Naive thymus-derived CD4-positive, alpha-beta T cell (primary cell): ENCODE measurements at regions of chr2 and their contacts with region 1.

Region 1: GRCh38 chr2:201231781-201232466 is 28.4 kb upstream of the CASP8 start:
- DNase-seq: peak; percentile 75 to 95 (median 91)
- ATAC-seq: peak; percentile 79
- H3K4me3 ChIP-seq: peak overlapping the region; percentile 70
- H3K4me3 Mint-ChIP-seq: peak overlapping the region; percentile 66 to 99 (median 96)
- H3K27ac ChIP-seq: no peak overlapping the region
- H3K27ac Mint-ChIP-seq: peak overlapping the region; percentile 85 to 98 (median 95)
- H3K4me1 ChIP-seq: peaks cover 27 to 32% of the 10 kb centered on the region in 2 donors
- H3K4me1 Mint-ChIP-seq: peaks cover 28 to 77% (median 67%) of the 10 kb centered on the region in 7 donors
- H3K27me3 ChIP-seq: no peaks in the 10 kb centered on the region
- H3K27me3 Mint-ChIP-seq: no peaks in the 10 kb centered on the region

Region 2: DNA sequence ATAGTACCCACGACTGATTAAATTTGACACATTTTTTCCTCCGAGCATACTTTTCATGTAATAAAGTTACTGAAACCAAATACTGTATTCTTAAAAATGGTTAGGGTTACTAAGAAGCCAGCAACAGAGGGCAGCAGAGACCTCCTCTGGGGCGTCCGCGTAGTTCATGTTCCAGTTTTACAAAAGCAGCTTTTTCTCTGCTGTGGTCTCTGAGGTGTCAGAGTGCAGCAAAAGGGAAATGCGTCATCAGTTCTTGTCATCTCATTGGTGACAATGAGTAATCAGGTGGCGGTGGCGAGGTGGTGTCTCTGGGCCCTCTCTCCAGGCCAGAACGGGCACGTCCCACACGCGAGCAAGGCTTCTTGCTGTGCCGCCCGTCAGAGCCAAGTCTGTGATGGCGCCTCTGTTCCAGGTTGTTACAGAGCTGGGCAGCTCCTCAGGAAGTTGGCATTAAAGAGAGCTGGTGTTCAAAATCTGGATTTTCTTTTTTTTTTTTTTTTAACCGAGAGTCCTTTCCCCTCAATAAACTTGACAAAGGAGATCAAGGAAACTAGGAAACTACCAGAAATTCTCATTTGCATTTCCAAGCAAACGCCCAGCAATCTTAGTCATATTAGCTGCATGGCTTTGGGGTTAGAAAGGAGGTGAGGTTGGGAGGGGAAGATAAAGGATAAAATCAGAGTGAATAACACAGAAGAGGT is 518.8 kb before region 1 on chr2:
- CTCF ChIA-PET with region 1: interaction called, 5 read pairs
- POLR2A ChIA-PET with region 1: interaction called, 4 read pairs
- intact Hi-C with region 1: loop called (anchors 1 kb)
- DNase-seq: peak; percentile 72 to 96 (median 94)
- ATAC-seq: peak; percentile 98
- H3K4me3 ChIP-seq: peak overlapping the region; percentile 24
- H3K4me3 Mint-ChIP-seq: peak overlapping the region; percentile 75 to 88 (median 81)
- H3K27ac ChIP-seq: peak overlapping the region; percentile 82
- H3K27ac Mint-ChIP-seq: peak overlapping the region; percentile 97 to 100 (median 99)
- H3K4me1 ChIP-seq: peaks cover 5 to 8% of the 10 kb centered on the region in 2 donors
- H3K4me1 Mint-ChIP-seq: peaks cover 0 to 25% (median 12%) of the 10 kb centered on the region in 7 donors
- H3K27me3 ChIP-seq: no peaks in the 10 kb centered on the region
- H3K27me3 Mint-ChIP-seq: peaks cover 0 to 4% (median 0%) of the 10 kb centered on the region in 5 donors

Region 3: GRCh38 chr2:200963124-200963917 is 268.6 kb before region 1 on chr2 and contains the start of gene ORC2:
- CTCF ChIA-PET with region 1: interaction called, 3 read pairs
- POLR2A ChIA-PET with region 1: interaction called, 8 read pairs
- intact Hi-C with region 1: loop called (anchors 1 to 2 kb)
- DNase-seq: peak; percentile 92 to 97 (median 95)
- ATAC-seq: peak; percentile 98
- H3K4me3 ChIP-seq: peak within 1 kb of the TSS; percentile 89
- H3K4me3 Mint-ChIP-seq: peak within 1 kb of the TSS; percentile 89 to 100 (median 98)
- H3K27ac ChIP-seq: peak within 1 kb of the TSS; percentile 90
- H3K27ac Mint-ChIP-seq: peak within 1 kb of the TSS; percentile 96 to 100 (median 99)
- H3K4me1 ChIP-seq: peaks cover 21 to 32% of the 10 kb centered on the region in 2 donors
- H3K4me1 Mint-ChIP-seq: peaks cover 40 to 83% (median 70%) of the 10 kb centered on the region in 7 donors
- H3K27me3 ChIP-seq: no peaks in the 10 kb centered on the region
- H3K27me3 Mint-ChIP-seq: no peaks in the 10 kb centered on the region
- total RNA-seq, gene ORC2: 29.8 to 78.0 (median 56.2) TPM

Region 4: DNA sequence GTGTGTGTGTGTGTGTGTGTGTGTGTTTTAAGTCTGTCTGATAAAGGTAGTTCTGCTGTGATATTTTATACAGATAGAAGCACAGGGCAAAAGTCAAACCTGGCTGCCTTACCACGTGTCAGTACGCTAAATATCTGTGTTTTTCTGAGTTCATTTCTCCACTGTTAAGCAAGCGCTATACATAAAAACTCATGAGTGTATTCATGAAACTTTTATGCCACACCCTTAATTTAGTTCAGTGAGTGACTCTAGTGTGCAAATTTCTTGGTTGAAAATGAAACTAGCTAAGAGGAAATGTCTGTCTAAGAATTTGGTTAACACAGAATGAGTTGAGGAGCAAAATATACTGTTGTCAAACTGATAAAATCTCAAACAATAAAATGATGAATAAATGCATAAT is 37.8 kb before region 1 on chr2:
- CTCF ChIA-PET with region 1: interaction called, 70 read pairs
- POLR2A ChIA-PET with region 1: interaction called, 12 read pairs
- intact Hi-C with region 1: no loop called
- DNase-seq: peak in 7 of 9 donors; percentile 20 to 49 (median 38)
- ATAC-seq: peak; percentile 66
- H3K4me3 ChIP-seq: peak overlapping the region; percentile 18
- H3K4me3 Mint-ChIP-seq: peak overlapping the region; percentile 48 to 98 (median 78)
- H3K27ac ChIP-seq: peak overlapping the region; percentile 62
- H3K27ac Mint-ChIP-seq: peak overlapping the region; percentile 78 to 96 (median 91)
- H3K4me1 ChIP-seq: peaks cover 39 to 73% of the 10 kb centered on the region in 2 donors
- H3K4me1 Mint-ChIP-seq: peaks cover 44 to 88% (median 72%) of the 10 kb centered on the region in 7 donors
- H3K27me3 ChIP-seq: no peaks in the 10 kb centered on the region
- H3K27me3 Mint-ChIP-seq: no peaks in the 10 kb centered on the region

Region 5: GRCh38 chr2:201270293-201271001 is 38.5 kb after region 1 on chr2:
- CTCF ChIA-PET with region 1: interaction called, 64 read pairs
- POLR2A ChIA-PET with region 1: interaction called, 77 read pairs
- intact Hi-C with region 1: loop called (anchors 1 to 5 kb)
- DNase-seq: no peak
- ATAC-seq: no peak
- H3K4me3 ChIP-seq: no peak overlapping the region
- H3K4me3 Mint-ChIP-seq: peak overlapping the region in 6 of 10 donors; percentile 3 to 32 (median 16)
- H3K27ac ChIP-seq: peak overlapping the region; percentile 14
- H3K27ac Mint-ChIP-seq: peak overlapping the region in 8 of 9 donors; percentile 32 to 85 (median 59)
- H3K4me1 ChIP-seq: peaks cover 20 to 77% of the 10 kb centered on the region in 2 donors
- H3K4me1 Mint-ChIP-seq: peaks cover 48 to 88% (median 76%) of the 10 kb centered on the region in 7 donors
- H3K27me3 ChIP-seq: no peaks in the 10 kb centered on the region
- H3K27me3 Mint-ChIP-seq: no peaks in the 10 kb centered on the region

Region 6: DNA sequence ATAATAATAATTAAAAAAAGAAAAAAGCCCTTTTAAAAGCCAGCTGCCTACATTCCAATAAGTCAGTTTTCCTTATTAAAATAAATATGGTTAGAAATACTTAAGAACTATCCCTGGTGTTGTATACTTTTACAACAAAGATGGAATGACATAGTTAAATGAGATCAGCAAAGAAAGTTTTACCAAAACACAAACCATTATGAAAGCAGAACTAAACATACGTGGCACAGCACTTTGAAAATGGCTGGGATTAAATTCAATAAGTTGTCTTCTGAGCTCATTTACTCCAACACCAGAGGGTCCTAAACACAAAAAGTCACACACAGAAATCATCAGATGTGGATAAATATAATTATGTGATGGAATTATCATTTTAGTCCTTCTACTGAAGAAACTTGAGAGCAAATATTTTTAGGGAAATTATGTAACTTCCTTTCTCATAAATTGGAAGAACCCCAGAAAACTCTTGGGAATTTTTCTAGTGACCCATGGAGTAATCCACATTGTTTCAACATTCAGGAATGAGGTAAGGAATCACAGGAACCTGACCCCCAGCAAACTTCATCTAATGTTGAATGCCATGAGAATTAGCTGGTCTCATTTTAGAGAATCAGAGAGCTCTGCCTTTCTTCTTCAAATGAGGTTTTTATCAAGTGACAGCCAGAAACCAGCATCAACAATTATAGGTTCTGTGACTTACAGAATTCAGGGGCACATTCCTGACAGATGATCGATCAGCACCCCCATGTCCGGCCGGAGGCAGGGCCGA is 422.9 kb after region 1 on chr2:
- CTCF ChIA-PET with region 1: no interaction called
- POLR2A ChIA-PET with region 1: no interaction called
- intact Hi-C with region 1: no loop called
- DNase-seq: no peak
- ATAC-seq: no peak
- H3K4me3 ChIP-seq: no peak overlapping the region
- H3K4me3 Mint-ChIP-seq: no peak overlapping the region
- H3K27ac ChIP-seq: no peak overlapping the region
- H3K27ac Mint-ChIP-seq: no peak overlapping the region
- H3K4me1 ChIP-seq: no peaks in the 10 kb centered on the region
- H3K4me1 Mint-ChIP-seq: peaks cover 0 to 6% (median 0%) of the 10 kb centered on the region in 7 donors
- H3K27me3 ChIP-seq: no peaks in the 10 kb centered on the region
- H3K27me3 Mint-ChIP-seq: peaks cover 5 to 42% (median 13%) of the 10 kb centered on the region in 5 donors

Region 7: DNA sequence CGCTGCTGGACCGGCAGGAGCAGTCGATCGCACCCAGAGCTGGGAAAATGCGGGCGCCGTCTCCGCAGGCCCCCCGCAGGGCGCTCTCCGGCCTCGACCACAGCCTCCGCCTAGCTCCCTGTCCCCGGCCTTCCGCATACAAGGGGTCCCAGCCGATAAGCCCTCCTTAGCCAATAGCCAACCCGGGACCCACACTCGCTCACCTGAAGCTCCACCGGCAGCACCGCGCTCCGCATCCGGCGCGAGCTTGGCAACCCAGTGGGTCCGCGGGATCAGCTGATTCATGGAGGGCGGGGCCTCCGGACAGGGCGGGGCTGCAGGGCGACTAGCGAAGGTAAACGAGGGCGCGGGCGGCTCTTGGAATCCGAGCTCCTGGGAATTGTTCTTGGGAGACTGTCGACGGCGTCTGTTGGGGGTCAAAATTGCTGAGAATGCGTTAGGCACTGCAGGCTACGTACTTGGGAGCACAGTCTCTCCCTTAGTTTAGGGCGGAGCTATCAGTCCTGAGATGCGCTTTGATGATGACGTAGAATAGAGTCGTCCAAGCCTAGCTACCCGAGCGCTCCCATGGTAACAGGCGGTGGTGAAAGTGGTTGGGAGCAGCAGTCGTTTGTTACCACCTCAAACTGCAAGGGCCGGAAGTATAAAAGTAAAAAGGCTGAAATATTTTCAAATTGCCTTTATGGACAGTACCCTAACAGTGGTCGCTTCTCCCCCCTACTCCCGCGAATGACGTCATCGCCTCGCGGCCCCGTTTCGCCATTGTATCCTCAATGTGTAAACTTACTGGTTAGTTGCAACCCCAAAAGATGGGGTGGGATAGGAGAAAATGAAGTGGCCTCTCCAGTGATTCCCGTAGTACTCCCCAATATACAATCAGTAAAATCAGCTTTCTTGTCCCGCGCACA is 549.0 kb after region 1 on chr2 and contains the start of gene ALS2:
- CTCF ChIA-PET with region 1: no interaction called
- POLR2A ChIA-PET with region 1: interaction called, 3 read pairs
- intact Hi-C with region 1: loop called (anchors 1 to 2 kb)
- DNase-seq: peak; percentile 91 to 97 (median 95)
- ATAC-seq: peak; percentile 96
- H3K4me3 ChIP-seq: peak within 1 kb of the TSS; percentile 96
- H3K4me3 Mint-ChIP-seq: peak within 1 kb of the TSS; percentile 87 to 99 (median 98)
- H3K27ac ChIP-seq: peak within 1 kb of the TSS; percentile 84
- H3K27ac Mint-ChIP-seq: peak within 1 kb of the TSS; percentile 84 to 99 (median 97)
- H3K4me1 ChIP-seq: peaks cover 7 to 10% of the 10 kb centered on the region in 2 donors
- H3K4me1 Mint-ChIP-seq: peaks cover 5 to 36% (median 21%) of the 10 kb centered on the region in 7 donors
- H3K27me3 ChIP-seq: no peaks in the 10 kb centered on the region
- H3K27me3 Mint-ChIP-seq: peaks cover 0 to 22% (median 0%) of the 10 kb centered on the region in 5 donors
- total RNA-seq, gene ALS2: 8.9 to 13.5 (median 10.7) TPM